Activated CD8-positive, alpha-beta T cell treated with anti-CD3 and anti-CD28 coated beads for 36 hours (primary cell): ENCODE measurements at regions of chr22 and their contacts with region 1.

Region 1: DNA sequence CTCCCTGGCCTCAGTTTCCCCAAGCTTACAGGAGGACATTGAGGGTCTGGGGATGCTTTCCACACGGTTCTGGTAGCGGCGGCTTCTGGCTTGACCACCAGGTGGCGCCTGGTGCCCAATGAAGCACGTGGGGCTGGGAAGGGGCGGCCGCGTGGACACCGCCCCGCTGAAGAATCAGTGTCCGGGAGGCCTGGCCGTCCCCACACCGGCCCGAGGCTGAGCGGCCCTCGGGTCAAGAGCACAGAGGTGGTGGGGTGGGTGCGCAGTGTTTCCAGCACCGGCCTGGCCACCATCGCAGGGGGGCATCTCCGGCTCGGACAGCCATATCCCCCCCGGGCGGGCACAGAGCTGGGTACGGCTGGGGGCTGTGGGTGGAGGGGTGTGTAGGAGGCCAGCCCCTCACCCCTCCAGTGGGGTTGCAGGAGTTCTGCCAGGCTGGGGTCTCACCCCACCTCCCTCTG is 27.8 kb upstream of the PPARA start:
- DNase-seq: peak; percentile 81
- ATAC-seq: peak; percentile 87
- H3K4me3 Mint-ChIP-seq: no peak overlapping the region
- H3K27ac Mint-ChIP-seq: no peak overlapping the region
- H3K4me1 Mint-ChIP-seq: no peaks in the 10 kb centered on the region
- H3K27me3 Mint-ChIP-seq: no peaks in the 10 kb centered on the region
- CTCF ChIP-seq: peak; percentile 97

Region 2: DNA sequence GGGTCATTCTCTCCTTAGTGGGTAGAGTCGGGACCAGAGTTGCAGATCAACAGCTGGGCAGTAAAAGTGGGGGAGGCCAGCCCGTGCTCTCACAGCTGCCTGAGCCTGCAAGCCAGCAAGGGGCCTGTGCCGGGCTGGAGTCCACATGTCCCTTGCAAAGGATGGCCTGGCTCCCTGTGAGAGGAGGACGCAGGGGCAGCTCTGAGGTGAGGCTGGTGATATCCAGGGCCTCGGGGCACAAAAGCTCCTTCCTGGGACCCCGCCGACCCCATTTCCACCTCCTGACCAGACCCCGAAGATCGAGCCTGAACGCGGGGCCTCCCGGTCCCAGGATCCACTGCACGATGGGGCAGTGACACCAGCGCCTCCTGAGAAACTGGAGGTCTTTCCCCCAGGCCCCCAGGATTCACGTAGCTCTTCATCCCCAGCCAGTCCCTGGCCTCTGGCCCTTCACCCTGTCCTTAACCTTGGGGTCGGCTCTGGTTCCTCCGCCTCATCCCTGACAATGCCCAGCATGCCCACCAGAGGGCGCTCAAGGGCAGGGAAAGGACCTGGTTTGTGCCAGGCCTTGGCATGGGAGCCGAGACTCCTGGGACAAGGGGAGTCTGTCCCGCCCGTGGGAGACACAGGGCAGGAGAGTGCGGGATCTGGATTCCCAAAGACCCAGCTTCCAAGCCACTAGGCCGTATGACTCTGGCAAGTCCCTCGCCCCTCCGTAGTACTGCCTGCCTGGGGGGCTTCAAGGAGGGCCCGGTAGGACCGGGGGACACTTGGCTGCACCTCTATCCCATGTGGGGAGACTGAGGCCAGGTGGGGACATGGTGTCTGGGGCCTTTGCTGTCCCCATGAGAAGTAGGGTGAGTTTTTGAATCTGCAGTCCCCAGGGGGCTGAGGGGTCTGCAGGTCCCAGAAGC is 127.8 kb before region 1 on chr22:
- CTCF ChIA-PET with region 1: interaction called, 78 read pairs
- POLR2A ChIA-PET with region 1: interaction called, 7 read pairs
- intact Hi-C with region 1: no loop called
- DNase-seq: peak; percentile 83
- ATAC-seq: peak; percentile 81
- H3K4me3 Mint-ChIP-seq: no peak overlapping the region
- H3K27ac Mint-ChIP-seq: no peak overlapping the region
- H3K4me1 Mint-ChIP-seq: no peaks in the 10 kb centered on the region
- H3K27me3 Mint-ChIP-seq: peaks cover 2% of the 10 kb centered on the region
- CTCF ChIP-seq: peak; percentile 96

Region 3: GRCh38 chr22:46296257-46297150 is 174.0 kb after region 1 on chr22 and contains the start of gene GTSE1:
- CTCF ChIA-PET with region 1: interaction called, 8 read pairs
- POLR2A ChIA-PET with region 1: no interaction called
- intact Hi-C with region 1: loop called (anchors 5 kb)
- DNase-seq: peak; percentile 99
- ATAC-seq: peak; percentile 98
- H3K4me3 Mint-ChIP-seq: peak within 1 kb of the TSS; percentile 91
- H3K27ac Mint-ChIP-seq: peak within 1 kb of the TSS; percentile 94
- H3K4me1 Mint-ChIP-seq: peaks cover 23% of the 10 kb centered on the region
- H3K27me3 Mint-ChIP-seq: peaks cover 4% of the 10 kb centered on the region
- CTCF ChIP-seq: peak; percentile 11
- total RNA-seq, gene GTSE1: 39.4 to 41.4 TPM

Region 4: DNA sequence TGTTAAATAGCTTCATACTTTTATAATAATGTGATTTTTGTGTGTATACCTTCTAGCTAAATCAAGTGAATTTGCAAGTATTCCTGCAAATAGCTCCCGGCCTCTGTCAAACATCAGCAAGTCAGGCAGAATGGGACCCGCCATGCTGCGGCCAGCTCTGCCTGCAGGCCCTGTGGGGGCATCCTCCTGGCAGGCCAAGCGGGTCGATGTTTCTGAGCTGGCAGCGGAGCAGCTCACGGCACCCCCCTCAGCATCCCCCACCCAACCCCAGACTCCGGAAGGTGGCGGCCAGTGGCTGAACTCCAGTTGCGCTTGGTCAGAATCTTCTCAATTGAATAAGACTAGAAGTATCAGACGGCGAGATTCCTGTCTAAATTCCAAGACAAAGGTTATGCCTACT is 193.4 kb after region 1 on chr22:
- CTCF ChIA-PET with region 1: interaction called, 23 read pairs
- POLR2A ChIA-PET with region 1: no interaction called
- intact Hi-C with region 1: loop called (anchors 2 kb)
- DNase-seq: no peak
- ATAC-seq: no peak
- H3K4me3 Mint-ChIP-seq: no peak overlapping the region
- H3K27ac Mint-ChIP-seq: no peak overlapping the region
- H3K4me1 Mint-ChIP-seq: peaks cover 3% of the 10 kb centered on the region
- H3K27me3 Mint-ChIP-seq: no peaks in the 10 kb centered on the region
- CTCF ChIP-seq: no peak